SK-N-SH (cell line): ENCODE measurements at regions of chr10 and their contacts with region 1.

Region 1: GRCh38 chr10:46544989-46545791 is 11.3 kb downstream of the GPRIN2 start:
- DNase-seq: peak; percentile 62
- H3K4me3 ChIP-seq: no peak overlapping the region
- H3K27ac ChIP-seq: no peak overlapping the region
- H3K4me1 ChIP-seq: peaks cover 0 to 5% of the 10 kb centered on the region in 2 experiments; a peak in 1 of 4 replicates
- H3K27me3 ChIP-seq: no peaks in the 10 kb centered on the region
- CTCF ChIP-seq: peak; percentile 46
- EP300 ChIP-seq: no peak
- RAD21 ChIP-seq: no peak

Region 2: DNA sequence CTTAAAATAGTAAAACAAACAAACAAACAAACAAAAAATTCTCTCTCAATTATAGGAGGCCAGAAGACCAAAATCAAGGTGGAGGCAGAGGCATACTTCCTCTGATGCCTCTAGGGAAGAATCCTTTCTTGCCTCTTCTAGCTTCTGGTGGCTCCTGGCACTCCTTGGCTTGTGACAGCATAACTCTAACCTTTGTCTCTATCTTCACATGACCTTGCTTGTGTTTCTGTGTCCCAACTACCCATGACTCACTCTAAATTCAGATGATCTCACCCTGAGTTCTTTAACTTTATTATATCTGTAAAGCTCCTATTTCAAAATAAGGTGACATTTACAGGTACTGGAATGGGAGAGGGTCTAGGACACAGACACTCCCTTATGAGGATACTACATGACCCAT is 346.7 kb before region 1 on chr10:
- CTCF ChIA-PET with region 1: no interaction called
- POLR2A ChIA-PET with region 1: no interaction called
- DNase-seq: no peak
- H3K4me3 ChIP-seq: no peak overlapping the region
- H3K27ac ChIP-seq: no peak overlapping the region
- H3K4me1 ChIP-seq: no peaks in the 10 kb centered on the region
- H3K27me3 ChIP-seq: no peaks in the 10 kb centered on the region; the same call in 1 of the 2 replicates
- CTCF ChIP-seq: no peak
- EP300 ChIP-seq: no peak
- RAD21 ChIP-seq: no peak

Region 3: DNA sequence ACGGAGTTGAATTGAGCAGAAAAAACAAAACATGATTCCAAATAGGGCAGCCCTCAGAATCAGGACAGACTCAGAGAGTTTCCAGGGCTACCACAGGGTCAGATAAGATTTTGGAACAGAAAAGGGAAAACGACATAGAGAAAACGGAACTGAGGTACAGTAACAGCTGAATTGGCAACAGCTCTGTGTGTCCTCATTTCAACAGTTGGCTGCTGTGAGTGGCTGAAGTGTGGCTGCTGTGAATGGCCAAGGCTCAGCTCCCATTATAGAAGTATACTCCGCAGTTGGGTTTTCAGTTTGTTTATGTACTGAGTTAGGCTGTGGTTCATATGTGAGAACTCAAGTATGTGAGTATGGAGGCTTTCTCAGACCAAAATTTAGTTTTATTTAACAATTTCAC is 226.4 kb before region 1 on chr10:
- CTCF ChIA-PET with region 1: no interaction called
- POLR2A ChIA-PET with region 1: no interaction called
- DNase-seq: no peak
- H3K4me3 ChIP-seq: no peak overlapping the region
- H3K27ac ChIP-seq: no peak overlapping the region
- H3K4me1 ChIP-seq: peaks cover 0 to 2% of the 10 kb centered on the region in 2 experiments; a peak in 1 of 4 replicates
- H3K27me3 ChIP-seq: no peaks in the 10 kb centered on the region
- CTCF ChIP-seq: no peak
- EP300 ChIP-seq: no peak
- RAD21 ChIP-seq: no peak

Region 4: GRCh38 chr10:46530249-46531186 is 14.7 kb before region 1 on chr10:
- CTCF ChIA-PET with region 1: interaction called, 14 read pairs
- POLR2A ChIA-PET with region 1: no interaction called
- DNase-seq: no peak
- H3K4me3 ChIP-seq: no peak overlapping the region
- H3K27ac ChIP-seq: no peak overlapping the region
- H3K4me1 ChIP-seq: no peaks in the 10 kb centered on the region
- H3K27me3 ChIP-seq: no peaks in the 10 kb centered on the region
- CTCF ChIP-seq: no peak
- EP300 ChIP-seq: no peak
- RAD21 ChIP-seq: no peak

Region 5: DNA sequence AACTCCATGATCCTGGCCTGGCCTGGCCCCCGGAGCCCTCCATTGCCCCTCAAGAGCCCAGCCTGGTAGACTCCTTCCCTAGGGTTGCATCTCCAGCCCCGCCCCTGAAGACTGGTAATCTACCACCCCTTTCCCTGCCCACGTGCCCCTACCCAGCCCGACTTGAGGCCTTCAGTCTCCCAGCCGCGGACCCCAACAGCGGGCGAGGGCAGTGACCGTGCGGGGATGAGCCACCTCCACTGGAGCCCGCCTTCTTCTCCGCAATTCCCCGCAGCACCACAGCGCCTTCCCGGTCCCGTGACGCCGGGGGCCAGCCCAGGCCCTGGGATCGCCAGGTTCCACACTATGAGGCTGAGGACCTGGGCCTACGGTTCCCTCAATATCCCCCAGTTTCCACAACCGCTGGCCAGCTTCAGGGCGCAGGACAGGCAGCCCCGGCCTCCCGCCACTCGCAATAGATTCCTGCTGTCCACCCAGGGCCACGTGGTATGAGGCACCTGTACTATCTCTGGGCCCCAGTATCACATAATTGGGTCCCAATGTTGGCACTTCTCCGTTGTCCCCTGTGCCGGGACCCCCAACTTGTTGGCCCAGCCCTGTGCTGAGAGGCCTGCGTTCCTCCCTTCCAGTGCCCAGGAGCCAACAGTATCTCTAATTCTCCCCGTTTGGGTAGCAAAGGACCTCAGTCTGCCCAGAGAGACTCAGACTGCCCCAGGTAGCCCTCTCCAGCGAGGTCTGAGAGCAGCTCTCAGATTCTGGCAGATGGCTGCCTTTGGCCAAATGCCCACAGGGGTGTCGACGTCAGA is 12.3 kb after region 1 on chr10:
- CTCF ChIA-PET with region 1: interaction called, 11 read pairs
- POLR2A ChIA-PET with region 1: interaction called, 3 read pairs
- DNase-seq: no peak
- H3K4me3 ChIP-seq: no peak overlapping the region
- H3K27ac ChIP-seq: no peak overlapping the region
- H3K4me1 ChIP-seq: peaks cover 0 to 3% of the 10 kb centered on the region in 2 experiments; a peak in 1 of 4 replicates
- H3K27me3 ChIP-seq: peaks cover 37% of the 10 kb centered on the region
- CTCF ChIP-seq: no peak
- EP300 ChIP-seq: no peak
- RAD21 ChIP-seq: no peak